ENCODE measurements at regions of chr3 and their contacts with region 1.

Region 1: DNA sequence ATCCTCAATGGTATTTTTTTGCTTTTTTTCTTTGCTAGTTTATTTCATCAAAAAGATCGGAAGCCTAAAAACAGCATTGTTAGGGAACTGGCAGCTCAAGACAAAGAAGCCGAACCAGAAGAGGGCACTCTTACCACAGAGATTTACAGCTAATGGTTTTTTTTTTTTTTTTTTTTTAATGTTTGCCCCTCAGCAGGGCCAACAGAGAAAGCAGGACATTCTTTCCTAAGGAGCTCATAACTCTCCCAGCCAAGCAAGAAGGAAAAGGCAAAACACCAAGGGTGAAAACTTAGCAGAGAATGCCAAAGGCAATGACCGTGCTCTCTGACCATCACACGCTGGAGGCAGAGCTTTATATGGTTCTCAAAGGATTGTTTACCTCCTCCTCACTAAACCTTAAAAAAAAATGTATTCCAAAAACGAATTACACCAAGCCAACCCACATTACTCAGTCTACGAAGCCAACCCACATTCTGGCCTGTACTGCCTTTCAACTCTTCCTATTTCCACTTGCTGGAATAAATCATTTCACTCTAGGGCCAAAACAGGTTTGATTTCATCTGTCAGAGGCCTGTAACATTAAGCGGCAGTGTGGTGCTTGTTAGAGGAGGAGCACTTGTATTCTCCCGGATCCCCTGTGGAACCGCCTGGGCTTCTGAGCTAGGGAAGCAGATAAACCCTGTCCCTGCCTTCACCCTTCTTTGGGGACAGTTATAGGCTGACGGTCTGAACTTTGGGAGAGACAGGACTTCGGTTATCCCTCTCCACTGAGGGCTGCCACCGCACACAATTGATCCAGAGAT is 35.6 kb upstream of the GYG1 start:
- DNase-seq: peak in 3 of 5 donors; percentile 34 to 54 (median 53)
- ATAC-seq: peak; percentile 75 to 92 (median 90)
- H3K4me3 ChIP-seq: no peak overlapping the region
- H3K27ac ChIP-seq: peak overlapping the region; percentile 45 to 87 (median 70)
- H3K4me1 ChIP-seq: peaks cover 0 to 11% (median 2%) of the 10 kb centered on the region in 12 donors
- H3K27me3 ChIP-seq: no peaks in the 10 kb centered on the region
- CTCF ChIP-seq: peak; percentile 40 to 74 (median 64)
- POLR2A ChIP-seq: no peak

Region 2: GRCh38 chr3:148991194-148992026 is 35.7 kb after region 1 on chr3 and contains the start of gene GYG1:
- intact Hi-C with region 1: loop called in 1 of 10 experiments (anchors 2 kb)
- DNase-seq: peak; percentile 82 to 92 (median 87)
- ATAC-seq: peak; percentile 85 to 95 (median 94)
- H3K4me3 ChIP-seq: peak within 1 kb of the TSS; percentile 70 to 98 (median 92)
- H3K27ac ChIP-seq: peak within 1 kb of the TSS; percentile 85 to 99 (median 97)
- H3K4me1 ChIP-seq: peaks cover 0 to 30% (median 17%) of the 10 kb centered on the region in 12 donors
- H3K27me3 ChIP-seq: no peaks in the 10 kb centered on the region
- CTCF ChIP-seq: peak in 10 of 12 donors; percentile 11 to 61 (median 40)
- POLR2A ChIP-seq: peak in 1 of 2 donors; percentile 81
- total RNA-seq, gene GYG1: 78.2 to 190 (median 144) TPM

Region 3: GRCh38 chr3:149044339-149045083 is 88.8 kb after region 1 on chr3:
- intact Hi-C with region 1: no loop called
- DNase-seq: no peak
- ATAC-seq: no peak
- H3K4me3 ChIP-seq: no peak overlapping the region
- H3K27ac ChIP-seq: no peak overlapping the region
- H3K4me1 ChIP-seq: peaks cover 0 to 9% (median 0%) of the 10 kb centered on the region in 12 donors
- H3K27me3 ChIP-seq: no peaks in the 10 kb centered on the region
- CTCF ChIP-seq: no peak
- POLR2A ChIP-seq: no peak

Region 4: GRCh38 chr3:149086232-149086988 is 130.7 kb after region 1 on chr3 and contains the start of gene HLTF:
- intact Hi-C with region 1: loop called in 1 of 10 experiments (anchors 10 kb)
- DNase-seq: peak; percentile 95 to 97 (median 97)
- ATAC-seq: peak; percentile 98 to 100 (median 100)
- H3K4me3 ChIP-seq: peak within 1 kb of the TSS; percentile 34 to 87 (median 76)
- H3K27ac ChIP-seq: peak within 1 kb of the TSS in 11 of 12 donors; percentile 28 to 85 (median 71)
- H3K4me1 ChIP-seq: peaks cover 0 to 20% (median 9%) of the 10 kb centered on the region in 12 donors
- H3K27me3 ChIP-seq: no peaks in the 10 kb centered on the region
- CTCF ChIP-seq: no peak
- POLR2A ChIP-seq: peak in 1 of 2 donors; percentile 51
- total RNA-seq, gene HLTF: 12.3 to 39.4 (median 22.0) TPM

Region 5: GRCh38 chr3:149120051-149120972 is 164.6 kb after region 1 on chr3:
- intact Hi-C with region 1: loop called in 8 of 10 experiments (anchors 2 to 10 kb)
- DNase-seq: no peak
- ATAC-seq: peak in 3 of 4 donors; percentile 53 to 82 (median 73)
- H3K4me3 ChIP-seq: no peak overlapping the region
- H3K27ac ChIP-seq: no peak overlapping the region
- H3K4me1 ChIP-seq: peaks cover 0 to 4% (median 0%) of the 10 kb centered on the region in 12 donors
- H3K27me3 ChIP-seq: no peaks in the 10 kb centered on the region
- CTCF ChIP-seq: peak; percentile 47 to 82 (median 66)
- POLR2A ChIP-seq: no peak

Region 6: DNA sequence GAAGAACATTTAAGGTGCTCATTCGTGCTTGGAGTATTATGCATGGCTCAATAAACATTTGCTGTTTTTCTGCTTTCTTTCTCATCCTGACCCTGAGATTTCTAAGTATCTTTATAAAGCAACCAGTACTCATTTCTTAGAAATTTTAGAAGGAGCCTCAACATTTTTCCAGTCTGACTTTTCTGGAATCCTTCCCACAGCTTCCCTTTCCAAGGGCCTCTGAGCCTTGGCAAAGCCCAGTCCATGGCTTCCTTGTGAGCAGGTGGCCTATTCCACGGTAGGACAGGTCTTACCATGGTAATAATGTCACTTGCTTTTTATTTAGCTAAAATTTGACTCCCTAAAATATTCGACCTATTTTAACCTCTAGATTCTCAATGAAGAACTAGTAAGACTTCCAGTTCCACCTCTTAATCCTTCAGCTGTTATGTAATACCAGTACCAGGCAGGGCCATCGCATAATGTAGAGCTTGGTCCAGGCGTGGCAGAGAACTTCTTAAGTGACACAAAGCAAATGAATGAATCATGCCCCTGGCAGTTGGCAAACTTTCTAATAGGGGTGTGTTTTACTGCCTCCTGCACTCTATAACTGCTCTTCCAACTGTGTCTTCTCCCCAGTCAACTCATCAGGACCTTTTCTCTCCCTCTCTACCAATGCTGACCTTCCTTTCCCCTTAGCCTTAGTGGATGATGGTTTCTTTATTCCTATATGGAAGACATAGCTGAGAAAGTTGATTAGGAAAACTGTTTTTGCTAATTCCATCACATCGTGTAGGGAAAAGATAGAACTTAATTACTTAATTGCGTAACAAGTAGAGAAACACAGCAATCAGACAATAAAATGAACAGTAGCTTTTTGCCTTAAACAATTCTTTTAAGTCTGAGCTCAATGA is 517.9 kb after region 1 on chr3:
- intact Hi-C with region 1: loop called in 1 of 10 experiments (anchors 10 kb)
- DNase-seq: no peak
- ATAC-seq: peak in 3 of 4 donors; percentile 45 to 70 (median 60)
- H3K4me3 ChIP-seq: no peak overlapping the region
- H3K27ac ChIP-seq: peak overlapping the region in 4 of 12 donors; percentile 22 to 38 (median 25)
- H3K4me1 ChIP-seq: peaks cover 0 to 26% (median 6%) of the 10 kb centered on the region in 12 donors
- H3K27me3 ChIP-seq: no peaks in the 10 kb centered on the region
- CTCF ChIP-seq: no peak
- POLR2A ChIP-seq: no peak